CD8-positive, alpha-beta T cell (primary cell): ENCODE measurements at regions of chr3 and their contacts with region 1.

Region 1: GRCh38 chr3:18751514-18751913 is 326.4 kb upstream of the SATB1 start:
- DNase-seq: no peak
- ATAC-seq: no peak
- H3K4me3 ChIP-seq: no peak overlapping the region
- H3K4me3 Mint-ChIP-seq: no peak overlapping the region
- H3K27ac ChIP-seq: no peak overlapping the region
- H3K27ac Mint-ChIP-seq: no peak overlapping the region
- H3K4me1 ChIP-seq: peaks cover 8% of the 10 kb centered on the region
- H3K4me1 Mint-ChIP-seq: peaks cover 63% of the 10 kb centered on the region
- H3K27me3 ChIP-seq: no peaks in the 10 kb centered on the region
- H3K27me3 Mint-ChIP-seq: no peaks in the 10 kb centered on the region
- CTCF ChIP-seq: no peak

Region 2: DNA sequence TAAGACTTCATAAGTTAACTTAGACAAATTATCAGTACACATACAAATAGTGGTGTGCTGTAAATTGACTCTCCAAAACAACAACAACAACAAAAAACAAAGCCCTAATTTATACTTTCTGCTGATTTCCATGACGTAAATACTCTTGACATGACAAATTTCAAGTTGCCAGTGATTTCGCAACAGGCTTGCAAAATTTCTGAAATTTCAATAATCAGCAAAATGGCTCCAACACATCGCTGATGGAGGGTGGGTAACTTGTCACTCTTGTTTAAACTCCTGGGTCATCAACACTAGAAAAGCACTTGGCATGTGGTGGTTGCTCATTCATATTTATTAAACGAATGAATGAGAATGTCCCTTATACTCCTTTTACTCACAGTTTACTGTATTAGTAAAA is 121.2 kb before region 1 on chr3:
- CTCF ChIA-PET with region 1: no interaction called
- POLR2A ChIA-PET with region 1: no interaction called
- intact Hi-C with region 1: no loop called
- DNase-seq: no peak
- ATAC-seq: no peak
- H3K4me3 ChIP-seq: no peak overlapping the region
- H3K4me3 Mint-ChIP-seq: no peak overlapping the region
- H3K27ac ChIP-seq: no peak overlapping the region
- H3K27ac Mint-ChIP-seq: no peak overlapping the region
- H3K4me1 ChIP-seq: no peaks in the 10 kb centered on the region
- H3K4me1 Mint-ChIP-seq: no peaks in the 10 kb centered on the region
- H3K27me3 ChIP-seq: no peaks in the 10 kb centered on the region
- H3K27me3 Mint-ChIP-seq: no peaks in the 10 kb centered on the region
- CTCF ChIP-seq: no peak

Region 3: GRCh38 chr3:18772699-18773305 is 21.3 kb after region 1 on chr3:
- CTCF ChIA-PET with region 1: no interaction called
- POLR2A ChIA-PET with region 1: no interaction called
- intact Hi-C with region 1: loop called in 1 of 2 experiments (anchors 1 kb)
- DNase-seq: peak in 1 of 9 experiments; percentile 17
- ATAC-seq: no peak
- H3K4me3 ChIP-seq: no peak overlapping the region
- H3K4me3 Mint-ChIP-seq: no peak overlapping the region
- H3K27ac ChIP-seq: no peak overlapping the region
- H3K27ac Mint-ChIP-seq: no peak overlapping the region
- H3K4me1 ChIP-seq: peaks cover 14% of the 10 kb centered on the region
- H3K4me1 Mint-ChIP-seq: peaks cover 43% of the 10 kb centered on the region
- H3K27me3 ChIP-seq: no peaks in the 10 kb centered on the region
- H3K27me3 Mint-ChIP-seq: no peaks in the 10 kb centered on the region
- CTCF ChIP-seq: no peak